ENCODE measurements at regions of chr13 and their contacts with region 1.

Region 1: GRCh38 chr13:101520672-101521071 is 68.2 kb downstream of the ITGBL1 start:
- DNase-seq: peak; percentile 27 to 65 (median 41)
- H3K4me3 ChIP-seq: no peak overlapping the region
- H3K4me3 Mint-ChIP-seq: peak overlapping the region in 7 of 8 donors; percentile 43 to 87 (median 62)
- H3K27ac ChIP-seq: no peak overlapping the region
- H3K27ac Mint-ChIP-seq: peak overlapping the region; percentile 44 to 95 (median 77)
- H3K4me1 ChIP-seq: peaks cover 28% of the 10 kb centered on the region
- H3K4me1 Mint-ChIP-seq: peaks cover 25 to 37% (median 33%) of the 10 kb centered on the region in 4 donors
- H3K27me3 ChIP-seq: no peaks in the 10 kb centered on the region
- H3K27me3 Mint-ChIP-seq: no peaks in the 10 kb centered on the region

Region 2: DNA sequence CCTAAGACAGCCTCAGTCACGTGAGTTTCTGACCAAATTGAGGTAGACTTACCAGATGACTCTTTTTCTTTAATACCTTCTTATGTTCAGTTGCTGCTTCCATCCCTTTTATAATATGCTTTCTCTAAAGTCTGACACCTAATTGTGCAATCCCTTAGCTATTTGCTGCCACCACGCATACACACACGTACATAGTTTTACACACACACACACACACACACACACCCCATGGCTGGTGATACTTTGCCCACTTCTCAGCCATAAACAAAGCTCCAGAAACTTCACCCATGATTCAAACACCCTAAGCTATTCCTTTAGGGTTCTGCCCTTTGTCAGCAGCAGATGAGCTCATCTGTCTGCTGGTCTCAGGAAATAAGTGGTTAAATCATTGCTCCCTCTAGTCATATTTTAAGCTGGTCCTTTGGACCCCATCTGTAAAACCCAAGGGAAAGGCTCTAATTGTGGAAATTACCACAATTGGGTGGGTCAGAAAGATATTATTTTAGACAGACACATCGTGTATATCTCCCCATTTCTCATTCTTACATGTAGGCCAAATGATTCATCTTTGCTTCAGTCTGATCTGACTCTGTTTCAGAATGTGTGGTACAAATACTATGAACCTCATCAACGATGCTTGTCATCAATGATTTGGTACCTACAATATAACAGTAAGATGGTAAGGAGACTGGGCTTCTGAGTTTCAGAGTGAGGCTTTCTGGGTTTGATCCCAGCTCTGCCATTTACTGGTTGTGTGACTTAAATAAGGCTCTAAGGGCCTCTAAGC is 173.5 kb before region 1 on chr13:
- CTCF ChIA-PET with region 1: no interaction called
- POLR2A ChIA-PET with region 1: no interaction called
- intact Hi-C with region 1: no loop called
- DNase-seq: no peak
- H3K4me3 ChIP-seq: no peak overlapping the region
- H3K4me3 Mint-ChIP-seq: no peak overlapping the region
- H3K27ac ChIP-seq: no peak overlapping the region
- H3K27ac Mint-ChIP-seq: no peak overlapping the region
- H3K4me1 ChIP-seq: no peaks in the 10 kb centered on the region
- H3K4me1 Mint-ChIP-seq: no peaks in the 10 kb centered on the region
- H3K27me3 ChIP-seq: no peaks in the 10 kb centered on the region
- H3K27me3 Mint-ChIP-seq: no peaks in the 10 kb centered on the region

Region 3: GRCh38 chr13:101552797-101553196 is 32.1 kb after region 1 on chr13:
- CTCF ChIA-PET with region 1: no interaction called
- POLR2A ChIA-PET with region 1: no interaction called
- intact Hi-C with region 1: no loop called
- DNase-seq: no peak
- H3K4me3 ChIP-seq: no peak overlapping the region
- H3K4me3 Mint-ChIP-seq: no peak overlapping the region
- H3K27ac ChIP-seq: no peak overlapping the region
- H3K27ac Mint-ChIP-seq: no peak overlapping the region
- H3K4me1 ChIP-seq: no peaks in the 10 kb centered on the region
- H3K4me1 Mint-ChIP-seq: no peaks in the 10 kb centered on the region
- H3K27me3 ChIP-seq: no peaks in the 10 kb centered on the region
- H3K27me3 Mint-ChIP-seq: peaks cover 0 to 4% of the 10 kb centered on the region in 2 donors

Region 4: DNA sequence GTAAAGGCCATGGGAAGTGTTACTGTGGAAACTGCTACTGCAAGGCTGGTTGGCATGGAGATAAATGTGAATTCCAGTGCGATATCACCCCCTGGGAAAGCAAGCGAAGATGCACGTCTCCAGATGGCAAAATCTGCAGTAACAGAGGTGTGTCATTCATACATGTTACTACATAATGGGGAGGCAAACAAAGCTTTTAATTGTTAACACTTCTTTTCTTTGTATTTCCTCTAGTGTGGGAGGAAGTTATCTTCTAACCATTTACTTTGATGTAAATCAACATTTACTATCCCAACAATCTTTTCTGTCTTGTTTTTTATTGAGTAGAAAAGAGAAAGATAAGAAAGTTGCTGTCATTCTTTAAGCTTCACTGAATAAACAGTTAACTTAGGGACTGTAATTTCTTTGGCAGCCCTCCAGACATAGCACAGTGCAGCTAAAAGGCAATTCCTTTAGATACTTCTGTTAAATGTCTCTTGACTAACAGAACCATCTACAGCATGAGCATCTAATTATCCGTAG is 58.7 kb after region 1 on chr13:
- CTCF ChIA-PET with region 1: no interaction called
- POLR2A ChIA-PET with region 1: no interaction called
- intact Hi-C with region 1: no loop called
- DNase-seq: no peak
- H3K4me3 ChIP-seq: no peak overlapping the region
- H3K4me3 Mint-ChIP-seq: no peak overlapping the region
- H3K27ac ChIP-seq: no peak overlapping the region
- H3K27ac Mint-ChIP-seq: no peak overlapping the region
- H3K4me1 ChIP-seq: no peaks in the 10 kb centered on the region
- H3K4me1 Mint-ChIP-seq: peaks cover 0 to 2% (median 0%) of the 10 kb centered on the region in 4 donors
- H3K27me3 ChIP-seq: no peaks in the 10 kb centered on the region
- H3K27me3 Mint-ChIP-seq: peaks cover 0 to 1% of the 10 kb centered on the region in 2 donors

Region 5: GRCh38 chr13:101626925-101627555 is 106.4 kb after region 1 on chr13:
- CTCF ChIA-PET with region 1: no interaction called
- POLR2A ChIA-PET with region 1: no interaction called
- intact Hi-C with region 1: loop called (anchors 5 kb)
- DNase-seq: peak in 4 of 5 donors; percentile 33 to 52 (median 40)
- H3K4me3 ChIP-seq: peak overlapping the region; percentile 12 to 80
- H3K4me3 Mint-ChIP-seq: peak overlapping the region; percentile 80 to 95 (median 88)
- H3K27ac ChIP-seq: peak overlapping the region; percentile 3
- H3K27ac Mint-ChIP-seq: peak overlapping the region; percentile 23 to 97 (median 91)
- H3K4me1 ChIP-seq: peaks cover 33% of the 10 kb centered on the region
- H3K4me1 Mint-ChIP-seq: peaks cover 19 to 44% (median 33%) of the 10 kb centered on the region in 4 donors
- H3K27me3 ChIP-seq: no peaks in the 10 kb centered on the region
- H3K27me3 Mint-ChIP-seq: peaks cover 0 to 6% of the 10 kb centered on the region in 2 donors

Measured in CD4-positive, alpha-beta memory T cell (primary cell).